Ovary (tissue), 10 donors: ENCODE measurements at regions of chr19 and their contacts with region 1.

Region 1: DNA sequence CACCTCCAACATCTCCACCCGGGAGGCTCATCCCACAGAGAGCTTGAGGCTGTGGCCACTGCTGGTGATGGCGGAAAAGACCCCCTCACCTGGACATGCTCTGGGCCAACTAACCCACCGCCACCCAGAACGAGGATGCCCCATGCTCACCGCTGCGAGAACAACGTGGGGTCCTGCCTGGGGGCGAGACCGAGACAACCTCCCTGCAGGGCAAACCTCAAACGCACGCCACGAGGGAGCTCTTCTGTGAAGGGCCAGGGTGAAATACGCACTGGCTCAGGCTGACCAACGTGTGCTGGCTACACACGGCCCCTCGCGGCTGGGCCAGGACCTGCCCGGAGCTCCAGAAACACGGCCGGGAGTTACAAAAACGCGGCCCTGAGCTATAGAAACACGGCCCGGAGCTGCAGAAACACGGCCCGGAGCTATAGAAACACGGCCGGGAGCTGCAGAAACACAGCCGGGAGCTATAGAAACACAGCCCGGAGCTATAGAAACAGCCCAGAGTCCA is 19.0 kb upstream of the PLPP2 start:
- DNase-seq: no peak
- H3K4me3 ChIP-seq: peak overlapping the region; percentile 14
- H3K27ac ChIP-seq: no peak overlapping the region
- H3K4me1 ChIP-seq: peaks cover 2% of the 10 kb centered on the region
- H3K27me3 ChIP-seq: no peaks in the 10 kb centered on the region
- CTCF ChIP-seq: no peak
- EP300 ChIP-seq: no peak
- POLR2A ChIP-seq: no peak

Region 2: GRCh38 chr19:336032-336614 is 25.9 kb after region 1 on chr19:
- intact Hi-C with region 1: no loop called
- DNase-seq: peak; percentile 39 to 80 (median 62)
- H3K4me3 ChIP-seq: no peak overlapping the region
- H3K27ac ChIP-seq: no peak overlapping the region
- H3K4me1 ChIP-seq: peaks cover 17% of the 10 kb centered on the region
- H3K27me3 ChIP-seq: no peaks in the 10 kb centered on the region
- CTCF ChIP-seq: no peak
- EP300 ChIP-seq: no peak
- POLR2A ChIP-seq: no peak

Region 3: GRCh38 chr19:372306-372890 is 62.2 kb after region 1 on chr19:
- intact Hi-C with region 1: loop called in 1 of 4 experiments (anchors 10 kb)
- DNase-seq: peak; percentile 28 to 80 (median 49)
- H3K4me3 ChIP-seq: no peak overlapping the region
- H3K27ac ChIP-seq: no peak overlapping the region
- H3K4me1 ChIP-seq: peaks cover 2% of the 10 kb centered on the region
- H3K27me3 ChIP-seq: no peaks in the 10 kb centered on the region
- CTCF ChIP-seq: no peak
- EP300 ChIP-seq: no peak
- POLR2A ChIP-seq: no peak